ENCODE measurements at regions of chr15 and their contacts with region 1.

Region 1: DNA sequence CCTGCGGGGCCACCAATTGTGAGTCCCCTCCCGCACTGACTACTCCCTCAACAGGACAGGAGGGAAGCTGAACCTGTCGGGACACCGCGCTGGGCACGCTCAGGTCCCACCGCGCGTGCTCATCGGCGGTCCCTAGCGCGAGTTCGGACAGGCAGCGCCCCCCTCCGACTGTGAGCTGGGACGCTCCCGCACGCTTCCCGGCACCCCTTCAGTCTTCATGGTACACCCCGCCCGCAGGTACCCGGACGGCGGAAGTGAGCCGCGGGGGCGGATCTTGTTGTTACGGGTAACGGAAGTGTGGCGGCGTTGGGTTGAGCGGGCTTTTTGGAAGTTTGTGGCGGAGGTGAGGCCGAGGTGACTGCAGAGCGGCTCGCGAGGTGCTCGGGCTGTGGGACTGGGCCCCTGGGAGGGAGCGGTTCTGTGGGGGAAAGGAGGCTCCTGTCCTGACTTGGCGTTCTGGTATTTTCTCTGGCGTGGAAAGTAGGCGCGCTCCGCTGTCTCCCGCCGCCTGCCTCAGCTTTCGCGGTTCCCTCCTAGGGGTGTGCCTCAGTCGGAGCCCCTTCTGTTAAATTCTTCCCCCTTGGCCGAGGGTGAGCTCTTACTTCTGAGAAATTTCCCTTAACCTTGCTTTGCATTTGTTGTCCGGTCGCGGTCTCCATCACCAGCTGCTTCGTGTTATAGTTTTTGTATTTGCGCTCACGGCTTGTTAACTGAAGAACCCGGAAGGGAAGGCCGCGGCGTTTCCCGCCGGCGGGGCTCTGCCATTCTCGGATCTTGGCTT is at the start of gene FANCI:
- DNase-seq: peak; percentile 97
- H3K4me3 Mint-ChIP-seq: peak within 1 kb of the TSS; percentile 91
- H3K27ac Mint-ChIP-seq: peak within 1 kb of the TSS; percentile 86
- H3K4me1 Mint-ChIP-seq: peaks cover 43% of the 10 kb centered on the region
- H3K27me3 Mint-ChIP-seq: peaks cover 5% of the 10 kb centered on the region
- total RNA-seq, gene FANCI: 196 TPM

Region 2: DNA sequence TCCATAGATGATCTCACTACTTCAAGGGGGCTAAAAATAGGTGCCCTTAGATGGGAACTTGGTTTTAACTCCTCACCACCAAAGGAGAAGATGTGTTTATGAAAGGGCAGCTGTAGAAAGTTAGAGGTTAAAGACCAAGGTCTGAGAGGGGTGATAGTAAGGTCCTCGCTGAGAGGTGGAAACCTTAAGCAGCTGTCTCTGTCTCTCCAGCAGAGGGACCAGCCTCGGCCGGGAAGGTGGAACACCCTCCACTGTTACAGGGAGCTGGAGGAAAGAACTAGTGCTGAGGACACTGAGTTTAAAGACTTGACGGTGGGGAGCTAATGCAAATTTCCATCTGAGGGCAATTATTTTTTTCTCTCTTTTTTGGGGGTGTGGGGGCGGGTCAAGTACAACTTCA is 13.6 kb before region 1 on chr15:
- CTCF ChIA-PET with region 1: no interaction called
- POLR2A ChIA-PET with region 1: interaction called, 10 read pairs
- DNase-seq: no peak
- H3K4me3 Mint-ChIP-seq: no peak overlapping the region
- H3K27ac Mint-ChIP-seq: no peak overlapping the region
- H3K4me1 Mint-ChIP-seq: peaks cover 13% of the 10 kb centered on the region
- H3K27me3 Mint-ChIP-seq: peaks cover 22% of the 10 kb centered on the region

Region 3: GRCh38 chr15:89299896-89300295 is 56.0 kb after region 1 on chr15:
- CTCF ChIA-PET with region 1: interaction called, 3 read pairs
- POLR2A ChIA-PET with region 1: interaction called, 12 read pairs
- DNase-seq: no peak
- H3K4me3 Mint-ChIP-seq: no peak overlapping the region
- H3K27ac Mint-ChIP-seq: peak overlapping the region; percentile 56
- H3K4me1 Mint-ChIP-seq: peaks cover 53% of the 10 kb centered on the region
- H3K27me3 Mint-ChIP-seq: no peaks in the 10 kb centered on the region

Region 4: GRCh38 chr15:89329329-89330084 is 85.6 kb after region 1 on chr15:
- CTCF ChIA-PET with region 1: interaction called, 5 read pairs
- POLR2A ChIA-PET with region 1: interaction called, 41 read pairs
- DNase-seq: peak; percentile 72
- H3K4me3 Mint-ChIP-seq: peak overlapping the region; percentile 46
- H3K27ac Mint-ChIP-seq: peak overlapping the region; percentile 85
- H3K4me1 Mint-ChIP-seq: peaks cover 51% of the 10 kb centered on the region
- H3K27me3 Mint-ChIP-seq: no peaks in the 10 kb centered on the region

Region 5: GRCh38 chr15:89334510-89335288 is 90.8 kb after region 1 on chr15 and contains the start of gene POLG:
- CTCF ChIA-PET with region 1: interaction called, 5 read pairs
- POLR2A ChIA-PET with region 1: interaction called, 41 read pairs
- DNase-seq: peak; percentile 99
- H3K4me3 Mint-ChIP-seq: peak within 1 kb of the TSS; percentile 84
- H3K27ac Mint-ChIP-seq: peak within 1 kb of the TSS; percentile 93
- H3K4me1 Mint-ChIP-seq: peaks cover 53% of the 10 kb centered on the region
- H3K27me3 Mint-ChIP-seq: peaks cover 8% of the 10 kb centered on the region
- total RNA-seq, gene POLG: 106 to 109 TPM